ENCODE measurements at regions of chr15 and their contacts with region 1.

Region 1: GRCh38 chr15:34038023-34038870 is 757 bp downstream of the AVEN start:
- DNase-seq: peak; percentile 88
- ATAC-seq: peak; percentile 76
- H3K4me3 Mint-ChIP-seq: peak overlapping the region; percentile 81
- H3K27ac Mint-ChIP-seq: peak overlapping the region; percentile 96
- H3K4me1 Mint-ChIP-seq: peaks cover 23% of the 10 kb centered on the region
- H3K27me3 Mint-ChIP-seq: no peaks in the 10 kb centered on the region

Region 2: GRCh38 chr15:33194704-33195670 is 843.3 kb before region 1 on chr15 and contains the start of gene FMN1:
- CTCF ChIA-PET with region 1: no interaction called
- POLR2A ChIA-PET with region 1: no interaction called
- intact Hi-C with region 1: loop called in 1 of 2 experiments (anchors 5 kb)
- DNase-seq: peak; percentile 94
- ATAC-seq: peak; percentile 99
- H3K4me3 Mint-ChIP-seq: peak within 1 kb of the TSS; percentile 65
- H3K27ac Mint-ChIP-seq: no peak within 1 kb of the TSS
- H3K4me1 Mint-ChIP-seq: peaks cover 24% of the 10 kb centered on the region
- H3K27me3 Mint-ChIP-seq: peaks cover 21% of the 10 kb centered on the region
- total RNA-seq, gene FMN1: 0.09 to 0.21 TPM

Region 3: GRCh38 chr15:34018021-34018645 is 20.1 kb before region 1 on chr15:
- CTCF ChIA-PET with region 1: no interaction called
- POLR2A ChIA-PET with region 1: interaction called, 5 read pairs
- intact Hi-C with region 1: loop called in 1 of 2 experiments (anchors 2 kb)
- DNase-seq: peak; percentile 46
- ATAC-seq: no peak
- H3K4me3 Mint-ChIP-seq: peak overlapping the region; percentile 20
- H3K27ac Mint-ChIP-seq: no peak overlapping the region
- H3K4me1 Mint-ChIP-seq: peaks cover 14% of the 10 kb centered on the region
- H3K27me3 Mint-ChIP-seq: no peaks in the 10 kb centered on the region

Region 4: GRCh38 chr15:34337557-34338306 is 299.5 kb after region 1 on chr15 and contains the start of gene SLC12A6:
- CTCF ChIA-PET with region 1: interaction called, 4 read pairs
- POLR2A ChIA-PET with region 1: interaction called, 3 read pairs
- intact Hi-C with region 1: loop called (anchors 5 kb)
- DNase-seq: peak; percentile 95
- ATAC-seq: peak; percentile 82
- H3K4me3 Mint-ChIP-seq: peak within 1 kb of the TSS; percentile 83
- H3K27ac Mint-ChIP-seq: peak within 1 kb of the TSS; percentile 97
- H3K4me1 Mint-ChIP-seq: peaks cover 67% of the 10 kb centered on the region
- H3K27me3 Mint-ChIP-seq: no peaks in the 10 kb centered on the region
- total RNA-seq, gene SLC12A6: 18.2 to 22.1 TPM

Region 5: DNA sequence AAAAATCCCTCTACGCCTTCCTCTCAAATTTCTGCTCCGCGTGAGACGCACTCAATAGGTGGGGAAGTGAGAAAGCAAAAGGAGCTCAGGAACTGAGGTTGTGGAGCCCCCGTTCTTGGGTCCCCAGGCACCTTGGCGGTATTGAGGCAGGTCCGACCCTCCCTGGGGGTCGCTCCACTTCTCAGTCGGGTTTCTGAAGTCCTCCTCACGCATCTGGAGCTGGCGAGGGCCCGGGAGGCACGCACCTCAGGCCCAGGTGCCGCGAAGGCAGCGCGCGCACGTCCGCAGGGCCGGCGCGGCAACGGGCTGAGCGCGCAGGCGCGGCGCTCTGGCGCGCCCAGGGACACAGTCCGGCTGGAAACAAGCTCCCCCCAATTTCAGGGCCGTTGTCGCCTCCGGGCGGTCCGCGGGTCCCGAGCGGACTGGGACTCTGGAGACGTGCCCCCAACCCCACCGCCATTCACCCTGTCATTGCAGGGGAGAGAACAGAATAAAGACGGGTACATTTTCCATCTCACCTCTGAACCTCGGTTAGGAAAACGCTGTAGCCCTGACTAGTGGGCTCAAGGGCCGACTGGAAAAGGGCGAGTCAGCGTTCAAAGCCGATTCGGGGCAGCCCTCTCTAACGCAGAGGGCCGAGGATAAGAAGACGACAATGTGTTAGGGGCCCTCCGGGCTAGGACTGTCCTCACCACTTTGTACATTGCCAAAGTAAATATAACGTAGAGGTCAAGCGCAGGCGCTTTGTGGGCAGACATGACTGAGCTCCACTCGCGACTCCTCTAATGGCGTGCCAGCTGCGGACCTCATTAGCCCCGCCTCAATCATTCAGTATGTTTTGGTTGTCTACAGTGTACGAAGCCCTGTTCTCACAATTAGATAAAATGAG is 950.0 kb after region 1 on chr15 and contains the start of gene ZNF770:
- CTCF ChIA-PET with region 1: no interaction called
- POLR2A ChIA-PET with region 1: no interaction called
- intact Hi-C with region 1: loop called (anchors 5 kb)
- DNase-seq: peak; percentile 88
- ATAC-seq: peak; percentile 87
- H3K4me3 Mint-ChIP-seq: peak within 1 kb of the TSS; percentile 97
- H3K27ac Mint-ChIP-seq: peak within 1 kb of the TSS; percentile 98
- H3K4me1 Mint-ChIP-seq: peaks cover 35% of the 10 kb centered on the region
- H3K27me3 Mint-ChIP-seq: no peaks in the 10 kb centered on the region
- total RNA-seq, gene ZNF770: 64.1 to 65.1 TPM

Measured in activated CD4-positive, alpha-beta T cell treated with anti-CD3 and anti-CD28 coated beads for 36 hours (primary cell).